Activated naive CD8-positive, alpha-beta T cell treated with anti-CD3 and anti-CD28 coated beads, Interleukin-2, amount 10 ng/mL, durations not matched to agents 7 days and 5 days (primary cell): ENCODE measurements at regions of chr6 and their contacts with region 1.

Region 1: GRCh38 chr6:145734486-145735355 is 599 bp downstream of the EPM2A start:
- DNase-seq: peak; percentile 83
- ATAC-seq: peak; percentile 79
- H3K4me3 Mint-ChIP-seq: peak overlapping the region; percentile 92
- H3K27ac Mint-ChIP-seq: peak overlapping the region; percentile 94
- H3K4me1 Mint-ChIP-seq: peaks cover 11% of the 10 kb centered on the region
- H3K27me3 Mint-ChIP-seq: no peaks in the 10 kb centered on the region

Region 2: DNA sequence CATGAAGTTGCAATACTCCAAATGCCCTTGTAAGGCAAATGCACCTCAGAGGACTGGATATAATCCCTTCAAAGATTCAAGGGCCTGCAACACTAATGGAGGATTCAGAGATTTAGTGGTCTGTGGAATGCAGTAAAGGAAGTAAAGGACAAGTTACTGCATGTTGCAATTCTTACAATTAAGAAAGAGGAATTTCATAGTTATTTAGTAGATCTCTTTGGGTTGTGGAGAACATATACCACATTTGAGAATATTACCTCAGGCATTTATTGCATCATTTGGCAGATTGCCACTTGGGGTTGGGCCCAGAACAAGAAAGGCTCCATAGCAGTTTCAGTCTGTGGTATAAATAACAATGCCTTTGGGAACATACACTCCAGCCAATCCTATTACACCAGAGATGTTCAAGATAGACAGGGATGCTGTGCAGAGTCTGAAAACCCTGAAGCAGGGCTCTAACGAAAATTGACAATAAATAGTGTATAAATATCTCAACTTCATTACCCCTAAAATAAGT is 21.5 kb after region 1 on chr6:
- POLR2A ChIA-PET with region 1: no interaction called
- DNase-seq: no peak
- ATAC-seq: no peak
- H3K4me3 Mint-ChIP-seq: no peak overlapping the region
- H3K27ac Mint-ChIP-seq: no peak overlapping the region
- H3K4me1 Mint-ChIP-seq: no peaks in the 10 kb centered on the region
- H3K27me3 Mint-ChIP-seq: peaks cover 9% of the 10 kb centered on the region

Region 3: GRCh38 chr6:145814501-145815308 is 80.0 kb after region 1 on chr6 and contains the start of gene FBXO30:
- POLR2A ChIA-PET with region 1: interaction called, 69 read pairs
- DNase-seq: peak; percentile 94
- ATAC-seq: peak; percentile 83
- H3K4me3 Mint-ChIP-seq: peak within 1 kb of the TSS; percentile 93
- H3K27ac Mint-ChIP-seq: peak within 1 kb of the TSS; percentile 93
- H3K4me1 Mint-ChIP-seq: peaks cover 25% of the 10 kb centered on the region
- H3K27me3 Mint-ChIP-seq: no peaks in the 10 kb centered on the region
- total RNA-seq, gene FBXO30: 6.6 to 7.2 TPM

Region 4: DNA sequence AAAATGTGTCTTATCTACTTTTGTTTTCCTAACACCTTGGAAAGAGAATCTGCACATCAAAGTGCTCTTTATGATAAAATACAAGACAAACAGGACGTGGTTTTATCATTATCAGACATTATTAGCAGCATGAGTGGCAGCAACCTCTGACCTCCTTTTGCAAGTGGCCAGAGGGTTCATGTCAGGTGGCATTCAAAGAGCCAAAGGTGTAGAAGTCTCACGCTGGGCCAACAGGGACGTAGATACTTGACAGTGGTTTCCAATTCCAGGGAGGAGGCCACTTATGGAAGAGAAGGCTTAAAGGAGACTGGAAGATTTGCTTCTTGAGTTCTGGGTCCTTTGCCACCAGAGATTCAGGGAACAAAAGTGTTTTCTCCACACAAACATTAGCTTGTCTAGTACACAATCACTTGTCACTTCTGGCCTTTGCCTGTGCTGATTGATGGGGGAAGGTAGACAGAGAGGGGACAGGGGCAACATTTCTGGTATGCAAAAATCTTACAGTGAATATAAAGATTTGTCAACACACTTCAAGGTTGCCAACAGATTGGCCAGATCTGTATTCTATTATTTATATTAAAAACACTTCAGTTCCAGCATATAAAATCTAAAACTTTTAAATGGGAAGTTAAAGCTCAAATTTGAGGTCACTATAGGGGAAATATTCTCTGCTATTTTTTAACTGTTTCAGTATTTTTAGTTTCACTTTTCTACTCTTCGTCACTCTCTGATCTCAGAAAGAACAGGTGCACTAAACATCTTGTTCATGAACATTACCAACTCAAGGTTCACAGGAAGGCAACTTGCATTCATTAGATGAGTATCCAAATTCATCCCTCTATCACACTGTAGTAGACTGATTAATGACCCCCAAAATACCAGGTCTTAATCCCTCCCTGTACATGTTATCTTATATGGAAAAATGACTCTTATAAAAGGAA is 132.0 kb after region 1 on chr6:
- POLR2A ChIA-PET with region 1: interaction called, 11 read pairs
- DNase-seq: no peak
- ATAC-seq: peak; percentile 30
- H3K4me3 Mint-ChIP-seq: peak overlapping the region; percentile 61
- H3K27ac Mint-ChIP-seq: peak overlapping the region; percentile 81
- H3K4me1 Mint-ChIP-seq: peaks cover 26% of the 10 kb centered on the region
- H3K27me3 Mint-ChIP-seq: no peaks in the 10 kb centered on the region

Region 5: GRCh38 chr6:145899915-145900569 is 165.3 kb after region 1 on chr6:
- POLR2A ChIA-PET with region 1: no interaction called
- DNase-seq: no peak
- ATAC-seq: no peak
- H3K4me3 Mint-ChIP-seq: no peak overlapping the region
- H3K27ac Mint-ChIP-seq: no peak overlapping the region
- H3K4me1 Mint-ChIP-seq: peaks cover 3% of the 10 kb centered on the region
- H3K27me3 Mint-ChIP-seq: no peaks in the 10 kb centered on the region

Region 6: GRCh38 chr6:145963216-145964068 is 228.7 kb after region 1 on chr6:
- POLR2A ChIA-PET with region 1: interaction called, 18 read pairs
- DNase-seq: peak; percentile 57
- ATAC-seq: peak; percentile 20
- H3K4me3 Mint-ChIP-seq: peak overlapping the region; percentile 97
- H3K27ac Mint-ChIP-seq: peak overlapping the region; percentile 93
- H3K4me1 Mint-ChIP-seq: peaks cover 26% of the 10 kb centered on the region
- H3K27me3 Mint-ChIP-seq: no peaks in the 10 kb centered on the region